OCI-LY7 (cell line): ENCODE measurements at regions of chr1 and their contacts with region 1.

Region 1: DNA sequence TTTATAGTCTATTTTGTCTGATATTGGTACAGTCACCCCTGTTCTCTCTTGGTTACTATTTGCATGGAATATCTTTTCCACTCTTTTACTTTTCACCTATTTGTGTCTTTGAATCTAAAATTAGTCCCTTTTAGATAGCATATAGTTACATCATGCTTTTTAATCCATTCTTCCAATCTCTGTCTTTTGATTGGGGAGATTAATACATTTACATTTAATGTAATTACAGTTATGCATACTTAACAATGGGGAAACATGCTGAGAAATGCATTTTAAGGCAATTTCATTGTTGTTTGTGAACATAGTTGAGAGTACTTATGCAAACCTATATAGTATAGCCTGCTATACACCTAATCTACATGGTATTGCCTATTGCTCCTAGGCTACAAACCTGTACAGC is 48.4 kb upstream of the ATP6V1G3 start:
- DNase-seq: no peak
- H3K4me3 ChIP-seq: no peak overlapping the region
- H3K27ac ChIP-seq: no peak overlapping the region
- H3K4me1 ChIP-seq: no peaks in the 10 kb centered on the region
- CTCF ChIP-seq: no peak

Region 2: GRCh38 chr1:198575798-198576641 is 12.8 kb before region 1 on chr1:
- CTCF ChIA-PET with region 1: interaction called, 3 read pairs
- POLR2A ChIA-PET with region 1: interaction called, 22 read pairs
- intact Hi-C with region 1: no loop called
- DNase-seq: no peak
- H3K4me3 ChIP-seq: no peak overlapping the region
- H3K27ac ChIP-seq: no peak overlapping the region
- H3K4me1 ChIP-seq: peaks cover 8% of the 10 kb centered on the region
- CTCF ChIP-seq: no peak

Region 3: DNA sequence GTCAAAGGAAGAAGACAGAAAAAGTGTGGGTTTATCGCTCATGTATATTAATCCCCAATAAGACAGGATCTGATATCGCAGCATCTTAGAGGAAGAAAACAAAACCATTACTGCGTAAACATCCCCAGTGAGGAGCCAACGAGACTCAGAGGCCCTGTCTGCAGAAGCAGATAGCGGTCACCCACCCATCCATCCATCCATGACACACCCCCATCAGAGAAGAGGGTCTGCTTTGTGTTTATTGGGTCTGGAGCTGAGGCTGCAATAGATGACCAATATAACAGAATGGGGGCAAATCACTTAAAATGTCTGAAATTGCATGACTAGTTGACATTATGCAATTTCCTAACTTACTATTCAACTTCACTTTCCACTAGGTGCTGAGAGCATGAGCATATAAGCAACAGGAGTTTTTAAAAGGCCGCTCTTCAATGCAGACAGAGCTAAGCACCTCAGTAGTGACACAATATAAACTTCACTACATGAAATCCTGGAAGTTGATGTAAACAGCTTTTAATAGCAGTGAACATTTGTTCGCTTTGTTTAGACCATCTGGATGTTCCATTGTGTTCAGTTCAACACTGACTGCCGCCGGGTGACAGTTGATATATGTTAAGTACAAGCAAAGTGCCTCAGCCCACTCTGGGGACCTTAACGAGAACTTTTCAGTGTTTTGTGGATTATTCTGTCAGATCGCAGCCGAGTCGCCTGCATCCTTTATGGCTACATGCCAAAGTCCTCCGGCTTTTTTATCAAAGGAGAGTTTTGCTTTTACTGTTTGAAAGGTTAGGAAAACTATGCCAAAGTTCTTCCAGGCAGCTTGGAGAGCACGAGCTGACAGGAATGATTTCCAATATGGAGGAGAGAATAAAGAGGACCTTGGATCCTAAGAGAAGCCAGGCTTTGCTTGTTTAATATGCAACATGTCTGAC is 1653.5 kb after region 1 on chr1:
- CTCF ChIA-PET with region 1: no interaction called
- POLR2A ChIA-PET with region 1: no interaction called
- intact Hi-C with region 1: no loop called
- DNase-seq: no peak
- H3K4me3 ChIP-seq: no peak overlapping the region
- H3K27ac ChIP-seq: no peak overlapping the region
- H3K4me1 ChIP-seq: no peaks in the 10 kb centered on the region
- CTCF ChIP-seq: no peak